A673 (cell line): ENCODE measurements at regions of chr6 and their contacts with region 1.

Region 1: GRCh38 chr6:133504158-133504557 is 263.0 kb downstream of the EYA4 start:
- DNase-seq: no peak
- H3K4me3 ChIP-seq: no peak overlapping the region
- H3K27ac ChIP-seq: peak overlapping the region; percentile 88
- H3K4me1 ChIP-seq: peaks cover 44% of the 10 kb centered on the region
- H3K27me3 ChIP-seq: no peaks in the 10 kb centered on the region
- CTCF ChIP-seq: no peak

Region 2: DNA sequence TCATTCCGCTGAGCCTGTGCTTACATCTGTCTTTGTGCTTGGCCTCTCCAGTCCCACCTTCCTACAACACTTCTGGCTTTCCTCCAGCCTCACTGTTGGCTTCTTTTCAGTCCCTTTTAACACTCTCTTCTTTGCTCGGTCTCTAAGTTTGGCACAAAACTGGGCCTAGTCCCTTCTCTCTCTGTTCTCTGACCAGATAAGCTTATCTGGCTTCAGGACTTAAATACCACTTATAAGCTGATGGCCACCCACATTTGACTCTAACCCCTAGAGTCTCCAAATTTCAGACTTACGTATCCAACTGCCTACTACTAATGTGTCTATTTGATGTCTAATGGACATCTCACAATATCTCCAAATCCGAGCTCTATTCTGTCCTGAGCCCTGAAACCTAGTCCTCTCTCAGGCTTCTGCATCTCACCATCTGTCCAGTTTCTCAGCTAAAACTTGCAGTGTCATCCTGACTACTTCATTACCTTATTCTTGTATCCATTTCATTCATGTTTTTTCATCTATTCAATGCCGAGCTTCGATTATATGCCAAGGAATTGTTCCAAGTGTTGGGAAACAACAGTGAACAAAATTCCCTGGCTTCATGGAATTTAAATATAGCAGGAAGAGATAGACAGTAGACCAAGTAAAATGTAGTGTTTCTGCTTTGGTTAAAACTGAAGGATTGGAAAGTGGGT is 489.0 kb after region 1 on chr6:
- CTCF ChIA-PET with region 1: no interaction called
- POLR2A ChIA-PET with region 1: interaction called, 35 read pairs
- intact Hi-C with region 1: no loop called
- DNase-seq: no peak
- H3K4me3 ChIP-seq: no peak overlapping the region
- H3K27ac ChIP-seq: no peak overlapping the region
- H3K4me1 ChIP-seq: peaks cover 4% of the 10 kb centered on the region
- H3K27me3 ChIP-seq: no peaks in the 10 kb centered on the region
- CTCF ChIP-seq: no peak